ENCODE measurements at regions of chr6 and their contacts with region 1.

Region 1: DNA sequence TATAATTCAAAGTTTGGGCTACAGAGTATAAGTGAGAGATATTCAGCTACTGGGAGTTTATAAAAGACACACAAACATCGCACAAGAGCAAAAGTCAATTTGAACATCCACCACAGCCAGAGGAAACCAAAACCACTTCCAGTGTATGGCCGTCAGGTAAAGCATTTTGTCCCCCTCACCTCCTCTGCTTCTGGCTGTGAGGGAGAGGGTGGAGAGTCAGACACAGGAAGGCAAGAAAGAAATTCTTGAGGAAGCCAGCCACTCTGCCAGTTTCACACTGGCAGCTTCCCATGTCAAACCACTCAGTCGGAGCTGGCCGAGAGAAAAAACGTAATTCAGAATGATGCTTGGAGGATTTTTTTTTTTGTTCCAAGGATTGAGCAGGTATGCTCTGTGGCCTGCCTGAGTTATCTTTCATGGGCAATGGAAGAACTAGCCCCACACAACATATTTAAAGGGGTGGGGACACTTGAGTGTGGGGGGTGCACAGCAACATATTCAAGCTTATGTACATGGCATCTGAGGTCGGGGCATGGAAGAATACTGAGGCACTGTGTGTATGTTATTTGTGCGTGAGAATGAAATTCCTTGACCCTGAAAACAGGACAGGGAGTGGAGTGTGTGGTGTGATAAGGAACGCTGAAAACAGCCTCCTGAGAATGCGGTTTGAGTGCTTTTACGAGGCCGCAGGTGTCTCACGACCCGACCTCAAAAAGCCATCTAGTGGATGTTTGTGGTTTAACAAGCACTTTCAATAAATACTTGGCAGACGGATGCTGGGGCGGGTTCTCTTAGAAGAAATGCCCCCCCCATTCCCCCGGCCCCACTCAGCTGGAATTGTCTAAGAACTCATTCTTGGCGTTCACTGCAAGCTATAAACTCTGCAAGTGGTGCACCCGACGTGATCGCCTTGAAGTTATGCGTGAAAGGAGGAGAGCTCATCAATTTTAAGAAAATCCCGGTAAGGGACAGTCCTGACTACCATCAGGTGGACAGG is 27.5 kb upstream of the ZBTB22 start:
- DNase-seq: peak; percentile 86
- ATAC-seq: peak; percentile 66
- H3K4me3 Mint-ChIP-seq: peak overlapping the region; percentile 69
- H3K27ac Mint-ChIP-seq: peak overlapping the region; percentile 88
- H3K4me1 Mint-ChIP-seq: peaks cover 32% of the 10 kb centered on the region
- H3K27me3 Mint-ChIP-seq: peaks cover 4% of the 10 kb centered on the region

Region 2: DNA sequence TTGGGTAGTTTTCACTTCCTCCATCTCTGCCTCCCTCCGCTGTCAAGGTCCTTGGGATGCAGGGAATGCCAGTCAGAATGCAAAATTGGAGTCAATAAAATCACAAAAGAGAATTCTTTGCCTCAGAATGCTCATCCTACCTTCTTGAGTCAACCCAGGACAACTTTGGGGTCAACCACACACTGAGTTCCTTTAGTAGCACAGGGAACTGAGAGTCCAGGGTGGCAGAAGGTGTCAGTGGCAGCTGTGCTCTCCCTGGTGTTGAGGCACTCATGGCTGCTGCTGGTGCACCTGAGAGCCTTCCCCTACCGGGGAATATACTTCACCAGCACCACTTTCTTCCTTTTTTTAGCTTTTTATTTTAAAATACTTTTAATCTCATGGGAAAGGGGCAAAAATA is 1120.3 kb before region 1 on chr6:
- CTCF ChIA-PET with region 1: no interaction called
- DNase-seq: no peak
- ATAC-seq: no peak
- H3K4me3 Mint-ChIP-seq: no peak overlapping the region
- H3K27ac Mint-ChIP-seq: no peak overlapping the region
- H3K4me1 Mint-ChIP-seq: no peaks in the 10 kb centered on the region
- H3K27me3 Mint-ChIP-seq: no peaks in the 10 kb centered on the region

Region 3: DNA sequence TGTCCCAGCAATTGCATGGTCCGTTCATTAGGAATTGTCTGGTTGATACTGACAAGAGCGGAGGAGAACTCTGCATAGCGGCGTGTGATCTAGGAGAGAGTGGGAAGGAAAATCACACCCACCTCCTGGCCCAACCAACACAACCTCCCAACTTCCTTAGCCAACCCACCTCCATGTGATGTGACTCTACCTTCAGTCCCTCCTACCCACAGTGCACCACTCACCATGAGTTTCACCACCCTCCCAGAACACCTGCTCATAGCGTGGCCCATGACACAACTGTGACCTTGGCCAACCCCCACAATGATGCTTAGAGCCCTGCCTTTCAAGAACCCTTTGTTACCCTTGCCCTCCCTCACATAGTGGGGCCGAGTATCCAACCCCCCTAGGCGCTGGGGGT is 81.0 kb before region 1 on chr6:
- CTCF ChIA-PET with region 1: no interaction called
- DNase-seq: no peak
- ATAC-seq: no peak
- H3K4me3 Mint-ChIP-seq: no peak overlapping the region
- H3K27ac Mint-ChIP-seq: no peak overlapping the region
- H3K4me1 Mint-ChIP-seq: no peaks in the 10 kb centered on the region
- H3K27me3 Mint-ChIP-seq: no peaks in the 10 kb centered on the region

Region 4: DNA sequence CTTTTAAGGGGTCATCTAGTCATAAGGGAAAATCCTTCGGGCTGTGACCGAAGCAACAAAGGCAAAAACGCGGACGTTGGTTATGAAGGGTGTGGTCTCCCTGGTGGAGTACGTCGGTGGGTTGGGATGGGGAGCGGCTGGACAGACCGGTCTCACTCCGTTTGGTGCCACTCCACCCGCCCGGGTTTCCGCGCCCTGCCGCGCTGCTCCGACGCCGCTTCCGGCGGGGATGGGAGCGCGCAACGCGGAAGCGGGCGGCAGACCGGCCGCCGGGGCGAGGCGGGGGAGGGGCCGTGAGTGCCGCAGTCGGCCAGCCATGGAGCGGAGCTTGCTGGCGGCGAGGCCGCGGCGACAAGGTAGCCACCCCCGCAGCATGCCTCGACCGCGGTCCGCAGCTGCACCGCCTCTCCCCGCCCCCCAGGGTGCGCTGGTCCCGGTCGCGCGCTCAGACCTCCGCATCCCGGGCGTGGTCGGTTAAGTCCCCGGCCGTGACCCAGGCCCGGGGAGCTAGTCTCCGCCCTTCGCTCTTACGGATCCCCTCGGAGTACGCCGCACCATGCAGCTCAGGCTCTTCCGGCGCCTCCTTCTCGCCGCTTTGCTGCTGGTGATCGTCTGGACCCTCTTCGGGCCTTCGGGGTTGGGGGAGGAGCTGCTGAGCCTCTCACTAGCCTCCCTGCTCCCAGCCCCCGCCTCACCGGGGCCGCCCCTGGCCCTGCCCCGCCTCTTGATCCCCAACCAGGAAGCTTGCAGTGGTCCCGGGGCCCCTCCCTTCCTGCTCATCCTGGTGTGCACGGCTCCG is 67.9 kb before region 1 on chr6 and contains the start of gene B3GALT4:
- CTCF ChIA-PET with region 1: interaction called, 12 read pairs
- DNase-seq: peak; percentile 88
- ATAC-seq: peak; percentile 72
- H3K4me3 Mint-ChIP-seq: peak within 1 kb of the TSS; percentile 88
- H3K27ac Mint-ChIP-seq: peak within 1 kb of the TSS; percentile 97
- H3K4me1 Mint-ChIP-seq: peaks cover 60% of the 10 kb centered on the region
- H3K27me3 Mint-ChIP-seq: no peaks in the 10 kb centered on the region
- total RNA-seq, gene B3GALT4: 14.0 to 20.5 TPM

Region 5: DNA sequence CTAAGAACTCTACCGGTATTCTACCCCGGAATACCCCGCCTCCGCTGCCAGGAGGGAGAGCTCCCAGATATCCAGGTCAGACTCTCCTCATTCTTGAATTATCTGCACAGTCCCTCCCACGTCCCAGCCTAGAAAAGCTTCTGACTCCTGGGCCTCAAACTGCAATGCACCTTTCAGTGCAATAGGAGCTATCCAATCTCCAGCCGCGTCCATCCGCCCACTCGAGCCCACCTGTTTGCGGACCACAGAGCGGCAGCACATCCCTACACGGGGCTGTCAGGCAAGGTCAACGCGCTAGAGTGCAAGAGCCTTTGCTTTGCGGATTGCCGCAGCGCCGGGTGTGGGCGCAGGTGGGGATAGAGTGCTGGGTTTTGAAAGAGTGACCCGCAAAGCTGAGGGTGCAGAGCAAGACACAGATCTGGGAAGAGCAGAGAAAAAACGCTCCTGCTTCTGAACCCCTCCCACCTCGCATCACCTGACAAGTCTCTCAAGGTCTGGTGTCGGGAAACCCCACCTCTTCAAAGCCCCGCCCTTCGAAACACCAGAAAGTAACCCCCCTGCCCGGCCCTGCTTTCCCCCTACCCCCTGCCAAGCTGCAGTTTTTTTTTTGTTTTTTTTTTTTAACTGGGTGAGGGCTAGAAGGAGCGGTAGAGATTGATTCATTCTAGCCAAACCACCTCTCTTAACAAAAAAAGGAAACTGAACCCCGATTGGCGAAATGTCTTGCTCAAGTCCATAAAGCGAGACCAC is 32.4 kb before region 1 on chr6:
- CTCF ChIA-PET with region 1: interaction called, 21 read pairs
- DNase-seq: peak; percentile 91
- ATAC-seq: peak; percentile 45
- H3K4me3 Mint-ChIP-seq: peak overlapping the region; percentile 98
- H3K27ac Mint-ChIP-seq: peak overlapping the region; percentile 99
- H3K4me1 Mint-ChIP-seq: peaks cover 58% of the 10 kb centered on the region
- H3K27me3 Mint-ChIP-seq: no peaks in the 10 kb centered on the region

Region 6: DNA sequence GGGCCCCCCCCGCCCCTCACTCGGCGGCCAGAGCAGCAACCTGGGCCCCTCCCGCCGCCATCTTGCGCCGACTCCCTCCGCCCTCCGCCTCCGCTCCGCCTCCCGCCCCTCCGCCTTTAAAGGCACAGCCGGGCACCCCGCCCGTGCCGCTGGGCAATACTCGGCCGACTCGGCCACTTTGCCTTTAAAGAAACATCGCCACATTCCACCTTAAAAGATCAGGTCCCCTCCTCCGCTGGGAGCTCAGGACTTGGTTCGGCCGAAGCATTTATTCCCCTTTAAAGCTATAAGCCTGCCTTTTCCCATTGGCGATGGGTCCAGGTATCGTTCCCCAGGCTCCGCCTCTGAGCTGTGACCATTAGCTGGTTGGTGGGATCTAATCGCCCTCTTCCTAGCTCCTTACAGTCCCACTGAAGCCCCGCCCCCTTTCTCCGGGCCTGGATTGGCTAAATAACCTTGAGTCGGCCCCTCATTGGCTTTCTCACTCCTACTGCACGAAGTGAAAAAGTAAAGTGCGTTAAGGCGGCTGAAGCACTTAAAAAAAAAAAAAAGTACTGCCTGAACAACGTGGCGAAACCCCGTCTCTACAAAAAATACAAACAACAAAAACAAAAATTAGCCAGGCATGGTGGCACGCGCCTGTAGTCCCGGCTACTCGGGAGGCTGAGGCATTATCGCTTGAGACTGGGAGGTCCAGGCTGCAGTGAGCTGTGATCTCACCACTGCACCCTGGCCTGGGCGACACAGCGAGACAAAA is 27.2 kb before region 1 on chr6 and contains the start of gene ZBTB22:
- CTCF ChIA-PET with region 1: interaction called, 21 read pairs
- DNase-seq: peak; percentile 98
- ATAC-seq: peak; percentile 71
- H3K4me3 Mint-ChIP-seq: peak within 1 kb of the TSS; percentile 90
- H3K27ac Mint-ChIP-seq: peak within 1 kb of the TSS; percentile 91
- H3K4me1 Mint-ChIP-seq: peaks cover 72% of the 10 kb centered on the region
- H3K27me3 Mint-ChIP-seq: no peaks in the 10 kb centered on the region
- total RNA-seq, gene ZBTB22: 10.6 to 11.8 TPM

Region 7: GRCh38 chr6:33380272-33380981 is 35.4 kb after region 1 on chr6:
- CTCF ChIA-PET with region 1: no interaction called
- DNase-seq: no peak
- ATAC-seq: no peak
- H3K4me3 Mint-ChIP-seq: no peak overlapping the region
- H3K27ac Mint-ChIP-seq: no peak overlapping the region
- H3K4me1 Mint-ChIP-seq: peaks cover 7% of the 10 kb centered on the region
- H3K27me3 Mint-ChIP-seq: peaks cover 3% of the 10 kb centered on the region

Region 8: GRCh38 chr6:33391278-33391921 is 46.4 kb after region 1 on chr6 and contains the start of gene KIFC1:
- CTCF ChIA-PET with region 1: interaction called, 11 read pairs
- DNase-seq: peak; percentile 100
- ATAC-seq: peak; percentile 97
- H3K4me3 Mint-ChIP-seq: peak within 1 kb of the TSS; percentile 99
- H3K27ac Mint-ChIP-seq: peak within 1 kb of the TSS; percentile 95
- H3K4me1 Mint-ChIP-seq: peaks cover 42% of the 10 kb centered on the region
- H3K27me3 Mint-ChIP-seq: no peaks in the 10 kb centered on the region
- total RNA-seq, gene KIFC1: 133 to 187 TPM